ENCODE measurements at regions of chr21 and their contacts with region 1.

Region 1: DNA sequence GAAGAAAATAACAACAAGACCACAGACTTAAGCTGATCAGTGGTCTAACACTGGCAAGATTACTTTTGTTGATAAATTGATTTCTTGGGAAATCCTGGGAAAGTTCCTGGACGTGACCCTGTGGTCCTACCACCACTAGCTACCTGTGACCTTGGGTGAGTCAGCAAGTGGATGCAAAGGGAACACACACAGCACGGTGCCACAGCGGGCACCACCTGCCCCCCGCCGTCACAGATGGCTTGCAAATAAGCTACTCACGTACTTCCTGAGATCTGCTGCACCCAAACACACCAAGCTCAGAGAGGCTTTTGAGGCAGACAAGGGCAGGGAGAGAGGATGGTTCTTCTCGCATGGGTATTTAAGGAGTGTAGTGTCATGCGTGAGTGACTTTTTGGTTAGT is 12.7 kb downstream of the CFAP298 start:
- DNase-seq: no peak
- ATAC-seq: no peak
- H3K4me3 Mint-ChIP-seq: no peak overlapping the region
- H3K27ac Mint-ChIP-seq: no peak overlapping the region
- H3K4me1 Mint-ChIP-seq: peaks cover 3% of the 10 kb centered on the region
- H3K27me3 Mint-ChIP-seq: no peaks in the 10 kb centered on the region

Region 2: DNA sequence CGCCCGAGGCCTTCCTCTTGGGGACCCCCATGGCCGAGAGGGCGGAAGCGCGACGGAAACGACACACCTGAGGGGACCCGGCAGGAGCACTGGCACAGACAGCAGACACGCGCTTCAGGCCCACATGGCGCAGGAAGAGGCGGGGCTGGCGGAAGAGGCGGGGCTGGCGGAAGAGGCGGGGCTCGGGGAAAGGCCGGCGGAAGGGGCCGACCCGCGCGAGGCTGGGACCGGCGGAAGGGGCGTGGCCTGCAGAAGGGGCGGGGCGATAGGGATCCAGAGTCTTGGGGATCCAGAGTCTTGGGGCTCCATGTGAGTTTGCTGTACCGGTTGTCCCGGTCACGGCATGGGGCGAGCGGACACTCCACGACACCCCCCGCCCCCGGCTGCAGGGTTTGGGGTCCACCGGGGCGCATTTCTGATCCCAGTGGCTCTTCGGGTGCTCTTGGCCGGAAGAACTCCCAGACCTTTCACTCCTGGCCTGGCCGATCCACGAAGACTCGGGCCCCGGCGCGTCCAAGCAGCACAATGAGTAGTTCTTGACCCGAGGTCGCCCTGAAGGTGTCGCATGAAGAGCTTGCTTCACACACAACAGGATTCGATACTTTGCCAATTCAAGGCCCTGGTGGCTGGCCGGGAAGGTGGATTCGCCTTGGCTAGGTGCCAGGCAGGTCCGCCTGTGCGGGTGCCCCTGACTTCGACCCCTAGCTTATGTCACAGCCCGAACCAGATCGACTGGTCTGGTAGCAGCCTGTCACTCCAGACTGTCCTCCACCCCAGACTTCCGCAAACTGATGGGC is 206.4 kb before region 1 on chr21 and contains the start of gene URB1:
- CTCF ChIA-PET with region 1: interaction called, 26 read pairs
- POLR2A ChIA-PET with region 1: no interaction called
- DNase-seq: peak; percentile 95
- ATAC-seq: peak; percentile 98
- H3K4me3 Mint-ChIP-seq: peak within 1 kb of the TSS; percentile 81
- H3K27ac Mint-ChIP-seq: peak within 1 kb of the TSS; percentile 82
- H3K4me1 Mint-ChIP-seq: peaks cover 39% of the 10 kb centered on the region
- H3K27me3 Mint-ChIP-seq: peaks cover 6% of the 10 kb centered on the region
- total RNA-seq, gene URB1: 17.4 to 19.4 TPM

Region 3: DNA sequence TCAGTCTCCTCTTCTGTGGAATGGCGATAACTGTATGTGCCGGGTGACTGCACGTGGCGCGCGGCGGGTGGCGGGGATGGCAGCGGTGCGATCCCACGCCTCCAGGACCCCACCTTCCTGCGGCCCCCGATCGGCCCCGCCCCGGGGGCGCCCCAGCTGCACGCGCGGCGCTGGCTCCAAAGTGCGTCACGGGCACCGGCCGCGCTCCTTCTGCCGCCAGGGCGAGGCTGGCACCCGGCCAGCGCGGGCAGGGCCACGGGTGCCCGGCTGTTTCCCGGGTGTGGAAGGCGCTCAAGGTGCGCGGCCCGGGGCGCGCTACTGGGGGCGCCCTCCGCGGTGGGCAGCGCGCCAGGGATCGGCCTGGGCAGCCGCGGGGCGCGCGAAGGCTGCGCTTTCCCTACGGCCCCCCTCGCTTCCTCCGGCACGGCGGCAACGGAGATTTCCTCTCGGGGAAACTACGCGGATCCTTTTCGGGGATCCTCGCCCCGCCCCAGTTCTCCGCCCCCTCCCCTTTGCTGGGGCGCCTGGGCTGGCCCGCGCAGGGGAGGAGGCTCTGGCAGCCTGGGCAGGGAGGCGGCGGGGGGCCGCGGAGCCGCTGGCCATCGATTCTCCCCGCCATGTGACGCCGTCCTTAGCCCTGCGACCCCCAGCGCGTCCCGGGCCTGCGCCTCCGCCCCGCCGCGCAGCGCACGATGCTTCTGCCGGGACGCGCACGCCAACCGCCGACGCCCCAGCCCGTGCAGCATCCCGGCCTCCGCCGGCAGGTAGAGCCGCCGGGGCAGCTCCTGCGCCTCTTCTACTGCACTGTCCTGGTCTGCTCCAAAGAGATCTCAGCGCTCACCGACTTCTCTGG is 187.1 kb before region 1 on chr21 and contains the start of gene EVA1C:
- CTCF ChIA-PET with region 1: interaction called, 26 read pairs
- POLR2A ChIA-PET with region 1: no interaction called
- DNase-seq: peak; percentile 62
- ATAC-seq: peak; percentile 68
- H3K4me3 Mint-ChIP-seq: peak within 1 kb of the TSS; percentile 91
- H3K27ac Mint-ChIP-seq: peak within 1 kb of the TSS; percentile 94
- H3K4me1 Mint-ChIP-seq: peaks cover 25% of the 10 kb centered on the region
- H3K27me3 Mint-ChIP-seq: no peaks in the 10 kb centered on the region
- total RNA-seq, gene EVA1C: 3.0 to 3.5 TPM

Region 4: DNA sequence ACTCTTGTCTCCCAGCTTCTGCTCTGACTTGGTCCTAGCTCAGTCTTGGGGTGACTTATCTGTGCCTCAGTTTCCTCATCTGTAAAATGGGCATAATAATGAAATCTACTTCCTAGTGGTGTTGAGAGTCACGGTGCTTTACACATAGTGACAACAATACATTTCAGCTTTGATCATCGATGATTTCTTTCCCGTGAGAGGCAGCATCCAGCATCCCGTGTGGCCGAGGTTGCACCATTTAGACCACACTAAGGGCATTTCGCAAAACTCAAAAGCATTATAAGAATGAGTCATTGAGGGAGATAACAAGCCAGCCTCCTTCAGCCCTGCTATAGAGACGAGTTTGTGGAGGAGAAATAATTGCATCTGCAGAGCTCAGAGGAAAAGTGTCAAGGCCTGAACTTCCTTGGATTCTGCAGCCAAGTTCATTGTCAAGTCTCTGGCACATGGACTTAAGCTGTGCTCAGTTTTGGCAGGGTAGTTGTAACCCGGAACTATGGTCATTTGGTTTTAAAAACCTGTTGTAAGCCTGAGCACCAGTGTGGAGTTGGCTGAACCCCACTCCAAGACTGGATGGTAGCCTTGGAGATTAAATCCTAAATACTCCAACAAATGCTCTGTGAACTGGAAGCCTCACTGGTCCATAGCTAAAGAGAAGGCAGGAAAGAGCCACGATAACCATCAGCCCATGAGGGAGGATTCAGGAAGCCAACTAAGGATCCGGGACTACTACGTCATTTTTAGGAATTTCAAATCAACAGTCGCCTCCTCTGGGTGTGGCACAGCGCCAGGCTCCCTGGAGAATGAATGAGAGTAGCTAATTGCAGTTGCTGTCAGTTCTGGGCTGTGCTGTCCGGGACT is 78.4 kb before region 1 on chr21:
- CTCF ChIA-PET with region 1: no interaction called
- POLR2A ChIA-PET with region 1: no interaction called
- DNase-seq: no peak
- ATAC-seq: no peak
- H3K4me3 Mint-ChIP-seq: no peak overlapping the region
- H3K27ac Mint-ChIP-seq: peak overlapping the region; percentile 8
- H3K4me1 Mint-ChIP-seq: peaks cover 2% of the 10 kb centered on the region
- H3K27me3 Mint-ChIP-seq: no peaks in the 10 kb centered on the region

Region 5: DNA sequence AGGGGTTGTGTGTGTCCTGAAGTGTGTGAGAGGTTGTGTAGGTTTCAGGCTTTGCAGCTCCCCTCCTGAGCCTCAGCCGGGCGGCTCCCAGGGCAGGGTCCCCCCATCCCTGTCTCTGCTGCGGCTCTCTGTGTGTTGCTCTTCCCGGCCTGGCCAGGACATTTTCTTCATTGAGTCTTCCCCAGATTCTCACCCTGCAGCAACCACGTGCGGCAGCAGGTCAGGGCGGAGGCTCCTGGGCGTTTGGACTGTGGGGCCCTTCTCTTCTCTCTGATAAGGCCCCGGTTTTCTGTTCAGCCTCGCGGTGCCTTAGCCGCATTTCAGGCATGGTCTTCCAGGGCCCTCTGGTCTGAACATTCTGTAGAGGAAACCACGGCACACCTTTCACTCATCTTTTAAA is 12.4 kb before region 1 on chr21:
- CTCF ChIA-PET with region 1: interaction called, 22 read pairs
- POLR2A ChIA-PET with region 1: no interaction called
- DNase-seq: no peak
- ATAC-seq: no peak
- H3K4me3 Mint-ChIP-seq: no peak overlapping the region
- H3K27ac Mint-ChIP-seq: no peak overlapping the region
- H3K4me1 Mint-ChIP-seq: peaks cover 2% of the 10 kb centered on the region
- H3K27me3 Mint-ChIP-seq: no peaks in the 10 kb centered on the region

Measured in activated CD8-positive, alpha-beta T cell treated with anti-CD3 and anti-CD28 coated beads, Interleukin-2, amount 10 ng/mL, durations not matched to agents 7 days and 5 days (primary cell).